Head of caudate nucleus (tissue), 42 donors: ENCODE measurements at regions of chr4 and their contacts with region 1.

Region 1: DNA sequence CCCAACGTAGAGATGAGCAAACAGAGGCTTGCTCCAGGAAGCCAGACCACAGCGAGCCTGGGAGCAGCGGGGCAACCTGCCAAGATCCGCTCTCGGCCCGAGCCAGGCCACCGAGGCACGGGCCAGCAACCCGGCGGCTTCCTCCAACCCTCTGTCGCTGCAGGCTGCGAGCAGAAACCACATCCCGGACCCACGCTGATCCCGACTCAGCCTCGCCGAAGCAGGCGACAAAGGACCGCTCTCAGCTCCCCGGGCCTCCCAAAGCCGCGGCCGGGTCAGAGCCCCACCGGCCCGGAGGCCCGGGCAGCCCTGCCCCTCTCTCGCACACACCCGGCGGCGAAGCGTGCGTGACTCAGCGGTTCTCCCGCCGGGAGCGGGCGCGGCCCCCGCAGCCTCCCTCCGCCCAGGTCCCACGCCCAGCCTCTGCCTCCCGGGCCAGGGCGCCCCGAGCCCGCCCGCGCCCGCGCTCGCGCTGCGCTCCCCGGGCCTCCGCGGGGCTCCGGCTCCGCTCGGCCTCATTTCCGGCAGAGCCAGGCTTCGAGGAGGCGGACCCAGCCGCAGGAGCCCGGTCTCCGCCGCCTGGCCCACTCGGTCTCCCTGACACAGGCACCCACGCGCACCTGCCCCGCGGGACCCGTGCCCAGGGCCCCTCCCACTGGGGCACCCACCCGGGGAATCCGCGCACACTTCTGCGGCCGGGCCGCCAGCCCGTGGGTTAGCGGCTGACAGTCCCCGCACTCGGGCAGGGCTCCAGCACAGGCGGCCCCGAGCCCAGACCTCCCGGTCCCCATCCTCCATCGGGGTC is 1.7 kb downstream of the PPP2R2C start:
- DNase-seq: peak in 41 of 42 donors; percentile 63 to 92 (median 81)

Region 2: GRCh38 chr4:6269616-6270511 is 200.8 kb before region 1 on chr4 and contains the start of gene WFS1:
- intact Hi-C with region 1: loop called (anchors 10 kb)
- DNase-seq: peak; percentile 95 to 99 (median 99)